ENCODE measurements at regions of chr10 and their contacts with region 1.

Region 1: GRCh38 chr10:5813287-5814109 is at the start of gene GDI2:
- DNase-seq: peak; percentile 94
- ATAC-seq: peak; percentile 90
- H3K4me3 ChIP-seq: peak within 1 kb of the TSS; percentile 89 to 100 (median 97)
- H3K27ac ChIP-seq: peak within 1 kb of the TSS; percentile 100
- H3K4me1 ChIP-seq: peaks cover 63% of the 10 kb centered on the region
- H3K27me3 ChIP-seq: peaks cover 0 to 3% of the 10 kb centered on the region in 2 experiments; a peak in 1 of 5 replicates
- CTCF ChIP-seq: no peak
- EP300 ChIP-seq: peak in 1 of 2 experiments; percentile 72; a peak in 3 of 4 replicates
- POLR2A ChIP-seq: peak; percentile 93 to 95
- RAD21 ChIP-seq: peak; percentile 58
- total RNA-seq, gene GDI2: 477 and 756 TPM in 2 replicates

Region 2: DNA sequence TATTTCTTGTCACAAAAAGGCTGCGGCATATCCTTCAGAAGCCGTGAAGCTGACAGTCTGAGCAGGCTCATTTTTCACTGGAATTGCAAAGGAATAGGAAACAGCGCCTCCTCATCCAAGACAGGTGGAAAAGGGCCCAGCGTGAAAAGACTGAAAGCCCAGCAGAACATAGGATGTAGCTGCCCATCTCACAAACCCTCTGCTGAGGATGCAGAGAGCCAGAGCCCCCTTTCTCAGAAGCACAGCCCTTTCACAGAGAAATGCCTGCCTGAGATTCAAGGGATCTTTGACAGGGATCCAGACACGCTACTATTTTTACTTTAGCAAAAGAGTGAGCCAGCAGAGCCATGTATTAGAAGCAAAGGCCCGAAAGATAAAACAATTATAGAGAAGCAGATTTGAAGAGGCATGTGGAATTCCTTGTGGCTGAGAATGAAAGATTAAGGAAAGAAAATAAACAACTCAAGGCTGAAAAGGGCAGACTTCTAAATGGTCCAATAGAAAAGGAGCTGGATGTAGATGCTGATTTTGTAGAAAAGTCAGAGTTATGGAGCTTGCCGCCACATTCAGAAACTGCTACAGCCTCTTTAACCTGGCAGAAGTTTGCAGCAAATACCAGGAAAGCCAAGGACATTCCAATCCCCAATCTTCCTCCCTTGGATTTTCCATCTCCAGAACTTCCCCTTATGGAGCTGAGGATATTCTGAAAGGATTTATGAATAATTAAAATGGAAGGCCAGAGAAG is 37.2 kb before region 1 on chr10:
- CTCF ChIA-PET with region 1: no interaction called
- POLR2A ChIA-PET with region 1: no interaction called
- in situ Hi-C with region 1: no loop called
- intact Hi-C with region 1: no loop called
- DNase-seq: no peak
- ATAC-seq: peak; percentile 57; the same call in 2 of the 3 replicates
- H3K4me3 ChIP-seq: no peak overlapping the region
- H3K27ac ChIP-seq: no peak overlapping the region
- H3K4me1 ChIP-seq: no peaks in the 10 kb centered on the region
- H3K27me3 ChIP-seq: no peaks in the 10 kb centered on the region
- CTCF ChIP-seq: peak; percentile 19; the same call in 1 of the 2 replicates
- EP300 ChIP-seq: no peak
- POLR2A ChIP-seq: no peak
- RAD21 ChIP-seq: no peak

Region 3: DNA sequence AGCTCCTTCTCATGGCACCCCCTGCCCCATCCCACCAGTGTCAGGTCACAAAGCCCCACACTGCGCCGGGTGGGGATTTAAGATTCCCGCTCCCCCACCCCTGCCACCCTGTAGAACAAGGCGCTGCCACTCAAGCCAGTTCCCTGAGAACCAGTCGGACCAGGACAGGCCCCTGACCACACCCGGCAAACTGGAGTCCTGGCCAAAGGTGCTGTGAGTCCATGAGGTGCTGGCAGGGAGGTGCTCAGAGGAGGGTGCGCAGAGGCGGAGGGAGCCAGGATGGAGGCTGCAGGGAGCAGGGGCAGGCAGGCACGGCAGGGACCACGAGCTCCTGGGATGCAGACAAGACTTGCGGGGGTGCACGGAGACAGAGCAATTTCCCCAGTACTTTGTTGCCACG is 19.4 kb after region 1 on chr10:
- CTCF ChIA-PET with region 1: no interaction called
- POLR2A ChIA-PET with region 1: interaction called, 21 read pairs
- in situ Hi-C with region 1: no loop called
- intact Hi-C with region 1: no loop called
- DNase-seq: no peak
- ATAC-seq: no peak
- H3K4me3 ChIP-seq: no peak overlapping the region
- H3K27ac ChIP-seq: no peak overlapping the region
- H3K4me1 ChIP-seq: peaks cover 74% of the 10 kb centered on the region
- H3K27me3 ChIP-seq: peaks cover 2 to 11% of the 10 kb centered on the region in 2 experiments; a peak in 2 of 5 replicates
- CTCF ChIP-seq: no peak
- EP300 ChIP-seq: no peak
- POLR2A ChIP-seq: no peak
- RAD21 ChIP-seq: no peak

Region 4: DNA sequence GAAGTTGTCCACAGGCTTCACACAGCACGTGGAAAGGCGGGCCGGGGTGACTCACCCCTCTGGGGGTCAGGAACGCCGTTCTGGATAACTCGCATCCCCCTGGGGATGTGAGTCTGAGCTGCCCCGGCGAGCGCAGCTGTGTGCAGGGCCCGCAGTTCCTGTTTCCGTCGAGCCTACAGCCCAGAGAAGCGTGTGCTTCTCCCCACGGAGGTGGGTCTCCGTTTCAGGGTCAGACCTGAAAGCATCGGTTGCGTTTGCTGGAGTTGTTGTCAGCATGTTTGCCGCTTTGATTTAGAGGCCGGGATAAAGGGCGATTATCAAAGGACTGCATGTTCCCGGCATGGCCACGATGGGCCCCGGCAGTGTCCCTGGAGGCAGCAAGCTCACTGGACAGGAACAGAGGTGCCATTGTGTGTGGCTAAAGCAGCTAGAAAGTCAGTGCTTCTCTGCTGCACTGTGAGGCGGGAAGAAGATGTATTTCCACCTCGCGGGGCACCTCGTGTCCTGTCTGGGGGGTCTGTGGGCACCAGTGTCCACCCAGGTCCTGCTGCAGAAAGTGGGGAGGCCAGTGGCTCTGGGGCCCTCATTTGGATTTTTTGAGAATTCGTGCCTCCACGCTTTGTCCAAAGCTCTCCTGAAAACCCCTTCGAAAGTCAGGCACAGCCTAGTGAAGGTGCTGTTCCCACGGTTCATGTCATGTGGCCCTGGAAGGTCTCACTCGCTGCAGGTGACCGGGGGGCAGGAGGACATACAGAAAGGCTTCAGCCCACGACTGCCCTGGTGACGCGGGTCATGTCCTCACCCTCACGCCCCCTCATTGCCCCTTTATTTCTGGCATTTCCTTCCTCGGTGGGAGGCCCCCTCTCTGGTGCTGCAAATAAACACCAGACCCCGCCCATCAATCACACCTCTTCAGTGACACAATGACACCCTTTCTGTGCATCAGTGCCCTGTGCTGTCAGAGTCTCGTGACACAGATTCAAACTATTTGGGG is 27.1 kb after region 1 on chr10:
- CTCF ChIA-PET with region 1: no interaction called
- POLR2A ChIA-PET with region 1: interaction called, 23 read pairs
- in situ Hi-C with region 1: no loop called
- intact Hi-C with region 1: no loop called
- DNase-seq: peak; percentile 73
- ATAC-seq: peak; percentile 95
- H3K4me3 ChIP-seq: peak overlapping the region; percentile 22 to 67 (median 42)
- H3K27ac ChIP-seq: peak overlapping the region; percentile 41
- H3K4me1 ChIP-seq: peaks cover 57% of the 10 kb centered on the region
- H3K27me3 ChIP-seq: peaks cover 0 to 1% of the 10 kb centered on the region in 2 experiments; a peak in 1 of 5 replicates
- CTCF ChIP-seq: peak; percentile 5; the same call in 1 of the 2 replicates
- EP300 ChIP-seq: peak in 1 of 2 experiments; percentile 30; a peak in 2 of 4 replicates
- POLR2A ChIP-seq: peak; percentile 63 to 74
- RAD21 ChIP-seq: 0 out of 2 replicates have a peak, but pooled peaks have one; percentile 23

Region 5: DNA sequence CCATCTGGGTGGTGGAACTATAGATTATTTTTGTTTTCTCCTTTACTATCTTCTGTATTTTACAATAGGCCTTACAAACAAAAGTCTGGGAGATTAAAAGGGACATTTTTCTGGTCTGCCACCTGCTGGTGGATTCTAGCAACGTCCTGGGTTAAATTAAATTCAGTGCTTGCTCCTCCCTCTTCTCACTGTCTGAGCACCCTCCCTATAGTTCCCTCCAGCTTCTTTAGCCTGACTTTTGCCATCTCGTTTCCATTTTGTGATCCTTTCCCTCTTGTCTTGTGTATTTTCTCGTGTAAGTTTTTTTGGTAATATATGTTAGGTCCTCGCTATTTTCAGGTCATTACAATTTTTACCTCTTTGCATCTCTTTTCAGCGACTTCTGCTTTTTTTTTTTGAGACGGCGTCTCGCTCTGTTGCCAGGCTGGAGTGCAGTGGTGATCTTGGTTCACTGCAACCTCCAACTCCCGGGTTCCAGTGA is 60.1 kb after region 1 on chr10:
- CTCF ChIA-PET with region 1: no interaction called
- POLR2A ChIA-PET with region 1: interaction called, 4 read pairs
- in situ Hi-C with region 1: loop called (anchors 10 kb)
- intact Hi-C with region 1: loop called (anchors 1 kb)
- DNase-seq: peak; percentile 57
- ATAC-seq: peak; percentile 83
- H3K4me3 ChIP-seq: no peak overlapping the region
- H3K27ac ChIP-seq: no peak overlapping the region
- H3K4me1 ChIP-seq: no peaks in the 10 kb centered on the region
- H3K27me3 ChIP-seq: no peaks in the 10 kb centered on the region
- CTCF ChIP-seq: peak; percentile 63
- EP300 ChIP-seq: no peak
- POLR2A ChIP-seq: no peak
- RAD21 ChIP-seq: peak; percentile 37; the same call in 1 of the 2 replicates

Measured in HepG2 (cell line).